ENCODE measurements at regions of chr17 and their contacts with region 1.

Region 1: GRCh38 chr17:80426681-80427326 is 11.8 kb downstream of the ENDOV start:
- DNase-seq: peak; percentile 67 to 95
- ATAC-seq: peak; percentile 74 to 91
- H3K4me3 ChIP-seq: no peak overlapping the region
- H3K27ac ChIP-seq: 0 out of 6 replicates have a peak overlapping the region, but pooled peaks of 1 of the 2 experiments have one; percentile 10
- H3K4me1 ChIP-seq: 0 out of 3 replicates have a peak, but pooled peaks cover 2% of the 10 kb centered on the region
- CTCF ChIP-seq: peak; percentile 98
- EP300 ChIP-seq: no peak
- POLR2A ChIP-seq: no peak
- RAD21 ChIP-seq: peak; percentile 98 to 99

Region 2: DNA sequence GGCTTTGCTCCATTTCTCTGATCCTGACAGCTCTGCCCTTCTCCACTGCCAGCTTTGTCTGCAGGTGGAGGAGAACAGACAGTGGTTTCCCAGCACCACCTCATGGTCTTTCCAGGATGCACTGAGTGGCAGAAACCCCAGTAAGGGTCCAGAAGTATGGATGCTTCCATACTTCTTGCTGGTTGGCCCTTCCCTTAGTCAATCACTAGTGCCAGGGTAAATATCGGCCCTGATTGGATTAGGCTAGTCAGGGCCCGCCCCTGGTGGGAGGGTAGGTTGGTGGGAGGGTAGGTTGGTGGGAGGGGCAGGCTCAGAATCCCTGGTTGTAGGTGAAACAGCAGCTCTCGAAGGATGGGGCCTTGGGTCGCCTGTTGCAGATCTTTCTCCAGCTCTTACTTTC is 156.0 kb before region 1 on chr17:
- CTCF ChIA-PET with region 1: no interaction called
- POLR2A ChIA-PET with region 1: no interaction called
- DNase-seq: peak; percentile 59 to 69
- ATAC-seq: peak; percentile 58 to 80; a peak in 4 of 6 replicates
- H3K4me3 ChIP-seq: no peak overlapping the region
- H3K27ac ChIP-seq: no peak overlapping the region
- H3K4me1 ChIP-seq: no peaks in the 10 kb centered on the region
- CTCF ChIP-seq: no peak
- EP300 ChIP-seq: no peak
- POLR2A ChIP-seq: no peak
- RAD21 ChIP-seq: no peak

Region 3: GRCh38 chr17:80414803-80415625 is 11.8 kb before region 1 on chr17 and contains the start of gene ENDOV:
- CTCF ChIA-PET with region 1: interaction called, 25 read pairs
- POLR2A ChIA-PET with region 1: interaction called, 13 read pairs
- DNase-seq: peak; percentile 97 to 99
- ATAC-seq: peak; percentile 91 to 92
- H3K4me3 ChIP-seq: peak within 1 kb of the TSS; percentile 74
- H3K27ac ChIP-seq: peak within 1 kb of the TSS; percentile 94 to 97
- H3K4me1 ChIP-seq: peaks cover 17% of the 10 kb centered on the region
- CTCF ChIP-seq: no peak
- EP300 ChIP-seq: no peak
- POLR2A ChIP-seq: peak; percentile 65
- RAD21 ChIP-seq: no peak
- polyA plus RNA-seq, gene ENDOV: 33.2 and 37.2 TPM in 2 replicates

Region 4: GRCh38 chr17:80446645-80447405 is 20.0 kb after region 1 on chr17:
- CTCF ChIA-PET with region 1: interaction called, 85 read pairs
- POLR2A ChIA-PET with region 1: no interaction called
- DNase-seq: no peak
- ATAC-seq: 0 out of 6 replicates have a peak, but pooled peaks of 1 of the 2 experiments have one; percentile 4
- H3K4me3 ChIP-seq: no peak overlapping the region
- H3K27ac ChIP-seq: no peak overlapping the region
- H3K4me1 ChIP-seq: peaks cover 6% of the 10 kb centered on the region; the same call in 1 of the 3 replicates
- CTCF ChIP-seq: no peak
- EP300 ChIP-seq: no peak
- POLR2A ChIP-seq: no peak
- RAD21 ChIP-seq: no peak

Region 5: DNA sequence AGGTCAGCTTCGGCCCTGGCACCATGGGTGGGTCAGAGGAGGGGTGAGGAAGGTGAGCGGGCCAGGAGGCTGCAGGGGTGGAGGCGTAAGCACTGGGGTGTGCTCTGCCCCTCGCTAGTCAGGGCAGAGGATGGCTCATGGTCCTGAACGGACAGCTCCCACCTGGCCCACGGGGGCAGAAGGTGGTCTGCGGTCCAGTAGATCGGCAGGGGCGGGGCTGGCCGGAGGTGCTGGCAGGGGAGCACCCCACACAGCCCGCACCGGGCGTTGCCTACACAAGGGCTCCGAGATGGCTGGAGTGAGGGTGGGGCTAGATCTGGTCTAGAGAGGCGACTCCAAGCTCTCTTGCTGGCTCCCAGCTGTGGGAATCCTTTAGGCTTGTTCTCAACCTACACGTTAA is 41.4 kb after region 1 on chr17:
- CTCF ChIA-PET with region 1: interaction called, 40 read pairs
- POLR2A ChIA-PET with region 1: no interaction called
- DNase-seq: no peak
- ATAC-seq: no peak
- H3K4me3 ChIP-seq: no peak overlapping the region
- H3K27ac ChIP-seq: no peak overlapping the region
- H3K4me1 ChIP-seq: no peaks in the 10 kb centered on the region
- CTCF ChIP-seq: no peak
- EP300 ChIP-seq: no peak
- POLR2A ChIP-seq: no peak
- RAD21 ChIP-seq: no peak

Region 6: GRCh38 chr17:80575057-80575875 is 148.5 kb after region 1 on chr17:
- CTCF ChIA-PET with region 1: interaction called, 23 read pairs
- POLR2A ChIA-PET with region 1: no interaction called
- DNase-seq: peak; percentile 95
- ATAC-seq: peak; percentile 99 to 100
- H3K4me3 ChIP-seq: no peak overlapping the region
- H3K27ac ChIP-seq: no peak overlapping the region
- H3K4me1 ChIP-seq: no peaks in the 10 kb centered on the region
- CTCF ChIP-seq: peak; percentile 100
- EP300 ChIP-seq: no peak
- POLR2A ChIP-seq: no peak
- RAD21 ChIP-seq: peak; percentile 99

Region 7: GRCh38 chr17:80970044-80970761 is 543.4 kb after region 1 on chr17:
- CTCF ChIA-PET with region 1: interaction called, 48 read pairs
- POLR2A ChIA-PET with region 1: no interaction called
- DNase-seq: peak; percentile 44 to 75
- ATAC-seq: peak; percentile 65 to 77
- H3K4me3 ChIP-seq: no peak overlapping the region
- H3K27ac ChIP-seq: no peak overlapping the region
- H3K4me1 ChIP-seq: no peaks in the 10 kb centered on the region
- CTCF ChIP-seq: peak; percentile 37; the same call in 2 of the 3 replicates
- EP300 ChIP-seq: no peak
- POLR2A ChIP-seq: no peak
- RAD21 ChIP-seq: peak; percentile 58 to 65; a peak in 4 of 5 replicates